ENCODE measurements at regions of chr11 and their contacts with region 1.

Region 1: DNA sequence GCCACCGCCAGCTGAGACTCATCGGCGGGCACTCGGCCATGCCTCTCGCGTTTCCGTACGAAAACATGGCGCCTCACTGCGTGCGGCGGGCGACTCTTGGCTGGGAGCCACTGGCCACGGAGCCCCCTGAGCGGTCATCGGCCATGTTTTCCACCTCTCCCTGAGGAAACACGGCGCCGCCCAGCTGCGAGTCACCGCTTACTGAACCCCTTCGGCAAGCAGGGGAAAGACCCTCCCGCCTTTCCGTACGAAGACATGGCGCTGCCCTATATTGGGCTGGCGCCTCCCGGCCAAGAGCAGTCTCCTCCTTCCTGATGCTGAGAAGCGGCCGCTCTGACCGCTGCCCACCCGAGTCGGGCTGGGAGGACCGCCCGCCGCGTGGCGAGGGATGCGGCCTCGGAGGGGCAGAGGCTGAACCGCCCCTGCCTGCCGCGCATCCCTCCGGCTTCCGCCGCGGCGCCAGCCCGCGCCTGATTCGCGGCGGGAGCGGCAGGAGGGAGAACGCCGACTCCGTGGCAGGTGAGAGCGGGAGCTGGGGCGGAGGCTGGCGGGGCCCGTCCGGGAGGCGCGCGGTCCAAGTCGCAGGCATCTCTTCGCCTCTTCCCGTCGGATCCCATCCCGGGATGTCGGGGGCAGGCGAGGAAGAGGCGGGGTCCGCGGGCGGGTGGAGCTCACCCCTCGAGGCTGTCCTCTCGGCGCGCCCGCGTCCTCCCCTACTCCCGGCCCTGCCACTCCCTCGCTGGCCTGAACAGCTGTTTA is at the start of gene TCP11L1:
- DNase-seq: peak; percentile 69 to 96 (median 76)
- ATAC-seq: peak; percentile 85 to 87
- H3K4me3 Mint-ChIP-seq: peak within 1 kb of the TSS; percentile 92 to 97 (median 95)
- H3K27ac Mint-ChIP-seq: peak within 1 kb of the TSS; percentile 83 to 96 (median 94)
- H3K4me1 Mint-ChIP-seq: peaks cover 6 to 19% (median 14%) of the 10 kb centered on the region in 4 donors
- H3K27me3 Mint-ChIP-seq: peaks cover 0 to 2% (median 0%) of the 10 kb centered on the region in 5 donors
- polyA plus RNA-seq, gene TCP11L1: 2.3 to 3.0 (median 2.4) TPM

Region 2: DNA sequence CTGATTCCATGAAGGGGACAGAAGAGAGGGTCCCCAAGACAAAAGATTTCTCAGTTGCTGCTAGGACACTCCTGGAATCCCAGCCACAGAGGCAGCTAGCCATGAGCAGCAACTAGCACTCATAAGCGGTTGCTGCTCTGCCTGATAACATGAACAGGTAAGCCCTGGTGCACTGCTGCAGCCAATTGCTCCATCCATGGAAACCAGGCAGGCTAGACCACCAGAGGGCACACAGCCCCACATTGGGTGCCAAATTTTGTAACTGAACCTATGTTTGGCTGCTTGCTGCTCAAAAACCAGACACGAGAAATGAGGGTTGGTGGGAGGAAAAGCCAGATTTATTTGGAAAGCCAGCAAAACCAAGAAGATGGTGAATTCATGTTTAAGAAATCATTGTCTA is 168.8 kb before region 1 on chr11:
- POLR2A ChIA-PET with region 1: no interaction called
- DNase-seq: peak in 9 of 10 donors; percentile 4 to 68 (median 15)
- ATAC-seq: peak in 1 of 2 donors; percentile 48
- H3K4me3 Mint-ChIP-seq: no peak overlapping the region
- H3K27ac Mint-ChIP-seq: peak overlapping the region in 1 of 10 donors; percentile 17
- H3K4me1 Mint-ChIP-seq: no peaks in the 10 kb centered on the region
- H3K27me3 Mint-ChIP-seq: peaks cover 3 to 14% (median 9%) of the 10 kb centered on the region in 5 donors

Region 3: GRCh38 chr11:33015621-33016551 is 23.6 kb before region 1 on chr11 and contains the start of gene DEPDC7:
- POLR2A ChIA-PET with region 1: interaction called, 34 read pairs
- DNase-seq: peak; percentile 65 to 89 (median 81)
- ATAC-seq: peak; percentile 81 to 82
- H3K4me3 Mint-ChIP-seq: peak within 1 kb of the TSS; percentile 82 to 96 (median 90)
- H3K27ac Mint-ChIP-seq: peak within 1 kb of the TSS; percentile 31 to 87 (median 82)
- H3K4me1 Mint-ChIP-seq: peaks cover 13 to 60% (median 44%) of the 10 kb centered on the region in 4 donors
- H3K27me3 Mint-ChIP-seq: peaks cover 0 to 15% (median 0%) of the 10 kb centered on the region in 5 donors
- polyA plus RNA-seq, gene DEPDC7: 0.77 to 2.7 (median 1.1) TPM

Region 4: DNA sequence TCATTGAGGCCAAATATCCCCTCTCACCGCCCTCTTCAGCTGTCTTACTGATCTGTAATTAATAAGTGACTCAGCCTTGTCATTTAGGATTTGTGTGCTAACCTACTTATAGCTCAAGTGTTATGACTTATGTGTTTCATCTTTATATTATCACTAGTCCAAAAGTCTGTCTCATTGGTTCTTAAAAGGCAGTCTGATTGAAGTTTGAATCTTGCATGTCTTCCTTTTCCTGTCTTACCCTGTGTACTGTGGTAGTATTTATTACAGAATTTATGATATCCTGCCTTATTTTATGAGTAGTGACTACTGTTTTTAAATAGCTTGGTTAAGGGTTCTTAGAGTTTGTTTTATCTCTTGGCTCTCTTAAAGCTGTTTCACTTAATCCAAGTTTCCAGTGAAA is 17.5 kb before region 1 on chr11:
- POLR2A ChIA-PET with region 1: interaction called, 16 read pairs
- DNase-seq: peak in 2 of 10 donors; percentile 11 to 24
- ATAC-seq: peak; percentile 46 to 70
- H3K4me3 Mint-ChIP-seq: peak overlapping the region in 4 of 10 donors; percentile 0 to 61 (median 14)
- H3K27ac Mint-ChIP-seq: peak overlapping the region in 4 of 10 donors; percentile 10 to 61 (median 47)
- H3K4me1 Mint-ChIP-seq: peaks cover 16 to 31% (median 28%) of the 10 kb centered on the region in 4 donors
- H3K27me3 Mint-ChIP-seq: peaks cover 0 to 11% (median 0%) of the 10 kb centered on the region in 5 donors